A673 (cell line): ENCODE measurements at regions of chr18 and their contacts with region 1.

Region 1: GRCh38 chr18:3380384-3380961 is 69.5 kb upstream of the TGIF1 start:
- DNase-seq: peak; percentile 79
- H3K4me3 ChIP-seq: no peak overlapping the region
- H3K27ac ChIP-seq: no peak overlapping the region
- H3K4me1 ChIP-seq: peaks cover 5% of the 10 kb centered on the region
- H3K27me3 ChIP-seq: no peaks in the 10 kb centered on the region
- CTCF ChIP-seq: peak; percentile 42

Region 2: DNA sequence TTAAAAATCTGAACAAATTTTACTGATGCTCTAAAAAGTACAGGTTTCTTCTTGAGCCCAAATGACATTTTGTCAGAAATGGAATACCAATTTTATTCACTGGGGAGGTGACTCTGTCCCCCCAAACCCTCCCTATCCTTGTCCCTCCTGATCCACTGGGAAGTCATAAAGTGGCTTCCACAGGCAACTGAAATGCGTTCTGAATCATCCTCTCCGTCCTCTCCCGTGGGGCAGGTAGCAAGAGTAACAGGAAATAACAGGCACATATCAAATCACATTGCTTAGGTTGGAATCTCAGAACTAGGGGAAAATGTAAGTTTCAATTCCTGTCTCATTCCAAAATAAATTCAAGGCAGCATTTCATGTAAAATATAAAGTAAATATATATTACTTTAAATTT is 74.1 kb before region 1 on chr18:
- CTCF ChIA-PET with region 1: interaction called, 11 read pairs
- POLR2A ChIA-PET with region 1: no interaction called
- intact Hi-C with region 1: no loop called
- DNase-seq: no peak
- H3K4me3 ChIP-seq: no peak overlapping the region
- H3K27ac ChIP-seq: no peak overlapping the region
- H3K4me1 ChIP-seq: peaks cover 11% of the 10 kb centered on the region
- H3K27me3 ChIP-seq: no peaks in the 10 kb centered on the region
- CTCF ChIP-seq: no peak